ENCODE measurements at regions of chr17 and their contacts with region 1.

Region 1: GRCh38 chr17:6473128-6473767 is 29.0 kb downstream of the PIMREG start:
- DNase-seq: peak; percentile 91
- H3K4me3 Mint-ChIP-seq: no peak overlapping the region
- H3K27ac Mint-ChIP-seq: no peak overlapping the region
- H3K4me1 Mint-ChIP-seq: peaks cover 5% of the 10 kb centered on the region
- H3K27me3 Mint-ChIP-seq: peaks cover 7% of the 10 kb centered on the region

Region 2: GRCh38 chr17:6421700-6422604 is 51.3 kb before region 1 on chr17:
- intact Hi-C with region 1: no loop called
- DNase-seq: peak; percentile 91
- H3K4me3 Mint-ChIP-seq: no peak overlapping the region
- H3K27ac Mint-ChIP-seq: no peak overlapping the region
- H3K4me1 Mint-ChIP-seq: peaks cover 3% of the 10 kb centered on the region
- H3K27me3 Mint-ChIP-seq: peaks cover 48% of the 10 kb centered on the region

Region 3: GRCh38 chr17:6574687-6575595 is 101.7 kb after region 1 on chr17:
- intact Hi-C with region 1: loop called (anchors 10 kb)
- DNase-seq: peak; percentile 80
- H3K4me3 Mint-ChIP-seq: peak overlapping the region; percentile 49
- H3K27ac Mint-ChIP-seq: peak overlapping the region; percentile 68
- H3K4me1 Mint-ChIP-seq: peaks cover 22% of the 10 kb centered on the region
- H3K27me3 Mint-ChIP-seq: no peaks in the 10 kb centered on the region

Region 4: DNA sequence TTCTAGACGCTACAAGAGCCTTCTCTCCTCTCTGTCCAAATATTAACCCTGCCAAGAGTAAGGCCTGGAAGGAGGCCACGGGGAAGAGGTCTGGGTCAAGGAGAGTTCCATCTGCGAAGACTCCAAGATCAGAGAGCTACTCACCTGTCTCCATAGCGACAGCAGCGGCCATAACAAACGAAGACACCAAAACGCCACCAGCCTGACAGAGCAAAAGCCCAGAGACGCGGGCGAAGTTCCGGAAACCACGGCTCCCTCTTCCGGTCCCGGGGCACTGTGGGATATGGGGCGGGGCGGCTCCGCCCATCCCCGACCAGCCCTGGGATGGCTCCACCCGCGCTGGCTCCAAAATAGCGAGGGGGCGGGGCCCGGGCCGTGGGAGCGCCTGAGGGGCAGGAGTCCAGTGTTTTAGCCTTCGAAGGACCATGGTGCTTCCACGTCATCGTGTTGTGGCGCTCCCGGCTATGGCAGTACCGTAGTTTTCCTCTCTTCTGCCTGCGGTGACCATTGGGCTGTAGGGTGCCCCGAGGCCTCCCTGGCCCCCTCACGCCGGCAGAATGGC is 178.2 kb after region 1 on chr17 and contains the starts of genes C17orf100 and MED31:
- intact Hi-C with region 1: loop called (anchors 2 kb)
- DNase-seq: peak; percentile 99
- H3K4me3 Mint-ChIP-seq: peak within 1 kb of the TSS; percentile 93
- H3K27ac Mint-ChIP-seq: peak within 1 kb of the TSS; percentile 99
- H3K4me1 Mint-ChIP-seq: peaks cover 50% of the 10 kb centered on the region
- H3K27me3 Mint-ChIP-seq: peaks cover 16% of the 10 kb centered on the region
- total RNA-seq, gene C17orf100: 1.8 and 1.9 TPM in 2 replicates
- total RNA-seq, gene MED31: 24.3 and 25.7 TPM in 2 replicates